ENCODE measurements at regions of chr21 and their contacts with region 1.

Region 1: DNA sequence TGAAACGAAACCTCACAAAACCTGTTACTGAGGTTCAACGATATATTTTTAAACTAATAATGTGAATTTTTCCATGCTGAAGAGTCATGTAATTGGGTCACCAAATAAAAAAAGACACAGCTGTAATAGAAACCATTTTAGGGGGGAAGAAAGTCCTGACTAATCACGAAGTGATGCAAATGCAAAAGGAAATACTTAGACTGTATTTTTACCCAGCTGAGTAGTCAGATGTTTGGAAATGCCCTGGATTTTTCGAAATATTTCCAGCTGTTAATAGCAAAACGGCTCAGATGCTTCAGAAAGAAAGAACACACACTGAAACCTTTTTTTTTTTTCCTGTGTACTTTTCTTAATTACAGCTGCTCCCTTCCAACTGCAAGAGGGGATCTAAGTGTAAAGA is 210.3 kb downstream of the SETD4 start:
- DNase-seq: no peak
- ATAC-seq: peak; percentile 82
- H3K4me3 ChIP-seq: no peak overlapping the region
- H3K27ac ChIP-seq: peak overlapping the region in 1 of 2 donors; percentile 77
- H3K4me1 ChIP-seq: no peaks in the 10 kb centered on the region
- H3K27me3 ChIP-seq: no peaks in the 10 kb centered on the region

Region 2: DNA sequence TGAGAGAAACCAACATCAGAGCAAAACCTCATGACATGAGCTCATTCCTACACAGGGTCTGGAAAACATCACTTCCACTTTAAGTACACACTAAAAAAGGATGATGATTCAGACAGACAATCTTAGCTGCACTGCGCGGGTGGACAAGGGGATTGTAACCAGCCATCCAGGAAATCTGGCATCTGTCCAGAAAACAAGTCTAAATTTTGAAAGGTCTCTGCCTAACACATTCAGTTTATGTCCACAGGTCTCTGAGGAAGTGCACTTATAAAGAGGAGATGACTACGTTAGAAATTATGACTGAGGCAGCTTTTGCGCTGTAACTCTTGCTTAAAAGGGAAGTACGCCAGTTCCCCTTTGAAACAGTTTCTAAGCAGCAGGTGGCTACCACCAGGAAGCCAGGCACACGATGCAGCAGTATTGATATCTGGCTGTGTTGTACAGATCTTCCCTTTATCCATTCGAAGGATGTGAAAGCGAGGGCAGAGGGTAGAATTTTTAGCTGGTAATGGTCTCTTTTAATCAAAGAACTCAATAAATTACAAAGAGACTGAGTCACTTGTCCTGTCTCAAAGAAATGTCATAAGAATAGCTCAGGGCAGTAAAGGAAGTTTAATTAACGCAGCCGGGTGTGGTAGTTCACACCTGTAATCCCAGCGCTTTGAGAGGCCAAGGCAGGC is 82.3 kb after region 1 on chr21:
- intact Hi-C with region 1: loop called in 1 of 2 experiments (anchors 5 kb)
- DNase-seq: peak in 1 of 2 donors; percentile 72
- ATAC-seq: peak; percentile 66
- H3K4me3 ChIP-seq: no peak overlapping the region
- H3K27ac ChIP-seq: no peak overlapping the region
- H3K4me1 ChIP-seq: peaks cover 0 to 3% of the 10 kb centered on the region in 2 donors
- H3K27me3 ChIP-seq: no peaks in the 10 kb centered on the region

Region 3: DNA sequence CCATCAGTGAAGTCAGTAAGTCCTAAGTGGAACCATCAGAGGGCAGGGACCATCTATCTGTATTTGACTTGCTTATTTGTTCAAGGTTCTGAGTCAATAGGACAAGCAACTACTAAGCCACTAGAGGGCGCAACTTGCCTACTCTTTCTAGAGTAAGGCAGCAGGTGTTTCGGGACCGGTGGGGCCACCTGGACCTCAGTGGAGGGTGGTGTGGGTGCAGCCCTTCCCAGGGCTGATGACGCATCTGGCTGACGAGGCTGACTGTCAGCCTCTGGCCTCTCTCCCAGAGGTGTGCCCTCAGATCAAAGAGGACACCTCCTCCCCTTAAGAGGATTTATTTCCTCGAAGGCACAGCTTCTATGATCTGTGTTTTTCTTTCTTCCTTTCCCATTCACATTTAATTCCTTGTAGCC is 291.5 kb after region 1 on chr21:
- intact Hi-C with region 1: no loop called
- DNase-seq: peak; percentile 77 to 84
- ATAC-seq: peak; percentile 70
- H3K4me3 ChIP-seq: no peak overlapping the region
- H3K27ac ChIP-seq: no peak overlapping the region
- H3K4me1 ChIP-seq: no peaks in the 10 kb centered on the region
- H3K27me3 ChIP-seq: no peaks in the 10 kb centered on the region